ENCODE measurements at regions of chr2 and their contacts with region 1.

Region 1: DNA sequence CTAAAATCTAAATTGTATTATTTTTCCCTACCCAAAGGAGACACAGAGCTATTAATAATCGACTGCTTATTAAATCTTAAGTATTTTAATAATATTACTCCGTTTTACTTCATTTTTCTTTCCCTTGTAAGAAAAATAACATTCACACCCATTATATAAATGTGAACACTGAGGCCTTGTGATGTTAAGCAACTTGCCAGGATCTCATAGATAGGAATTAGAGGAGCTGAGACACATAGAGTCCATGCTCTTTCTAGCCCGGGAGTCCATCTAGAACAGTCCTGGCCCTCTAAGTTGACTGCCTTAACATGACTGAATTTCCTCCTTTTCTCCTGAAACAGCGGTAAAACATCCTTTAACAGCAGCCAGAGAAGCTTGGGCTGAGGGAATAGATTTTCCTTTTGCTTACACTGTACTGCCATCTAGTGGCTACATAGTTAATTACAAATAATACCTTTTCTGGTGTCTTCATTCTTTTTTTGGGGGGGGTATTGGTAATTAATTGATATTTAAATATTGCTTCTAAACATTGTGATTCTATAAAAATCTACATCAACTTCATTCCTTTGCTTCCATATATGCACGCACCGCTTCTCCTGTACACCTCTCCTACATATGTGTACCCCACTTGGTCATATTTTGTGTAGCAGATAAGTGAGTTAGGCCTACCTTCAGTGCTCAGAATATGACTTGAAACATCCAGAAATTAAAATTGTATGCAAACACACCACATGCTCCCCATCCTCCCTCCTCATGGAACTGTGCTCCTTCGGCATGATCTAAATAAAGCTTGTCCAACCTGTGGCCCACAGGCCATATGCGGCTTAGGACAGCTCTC is 125.8 kb upstream of the HNMT start:
- DNase-seq: peak; percentile 42 to 68 (median 62)
- ATAC-seq: peak; percentile 80
- H3K4me3 ChIP-seq: no peak overlapping the region
- H3K27ac ChIP-seq: no peak overlapping the region
- H3K4me1 ChIP-seq: no peaks in the 10 kb centered on the region
- H3K27me3 ChIP-seq: no peaks in the 10 kb centered on the region
- CTCF ChIP-seq: peak; percentile 46 to 68 (median 60); a peak in 5 of 6 replicates
- EP300 ChIP-seq: no peak
- POLR2A ChIP-seq: no peak
- RAD21 ChIP-seq: peak; percentile 85 to 91

Region 2: DNA sequence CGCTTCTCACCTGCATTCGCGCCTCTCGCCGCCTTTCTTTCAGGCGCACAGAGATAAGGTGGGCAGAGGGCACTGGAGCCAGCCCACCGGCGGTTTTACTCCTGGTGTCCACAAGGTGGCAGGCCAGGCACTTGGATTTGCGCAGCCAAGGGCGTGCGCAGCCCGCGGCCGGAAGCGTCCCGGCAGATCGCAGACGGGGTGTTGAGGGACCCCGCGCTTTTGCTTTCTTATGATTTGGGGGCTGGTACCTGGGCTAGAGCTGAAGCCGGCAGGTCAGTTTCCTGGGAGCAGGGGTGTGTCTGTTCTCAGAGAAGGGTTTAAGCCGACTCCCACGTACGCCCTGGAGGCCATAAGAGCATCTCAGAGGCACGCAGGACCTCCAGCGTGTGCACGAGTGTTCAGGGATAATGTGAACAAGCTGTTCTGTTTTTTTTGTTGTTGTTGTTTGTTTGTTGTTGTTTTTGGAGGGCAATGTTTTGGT is 1414.9 kb before region 1 on chr2:
- CTCF ChIA-PET with region 1: interaction called, 5 read pairs
- POLR2A ChIA-PET with region 1: no interaction called
- in situ Hi-C with region 1: loop called (anchors 25 kb)
- intact Hi-C with region 1: loop called (anchors 2 kb)
- DNase-seq: peak; percentile 74 to 81 (median 76)
- ATAC-seq: peak; percentile 100
- H3K4me3 ChIP-seq: peak overlapping the region; percentile 3; the same call in 1 of the 2 replicates
- H3K27ac ChIP-seq: no peak overlapping the region
- H3K4me1 ChIP-seq: peaks cover 0 to 5% of the 10 kb centered on the region in 2 experiments; a peak in 2 of 5 replicates
- H3K27me3 ChIP-seq: peaks cover 0 to 8% of the 10 kb centered on the region in 2 experiments; a peak in 2 of 5 replicates
- CTCF ChIP-seq: peak; percentile 82 to 90 (median 86)
- EP300 ChIP-seq: no peak
- POLR2A ChIP-seq: no peak
- RAD21 ChIP-seq: peak; percentile 87 to 91

Region 3: DNA sequence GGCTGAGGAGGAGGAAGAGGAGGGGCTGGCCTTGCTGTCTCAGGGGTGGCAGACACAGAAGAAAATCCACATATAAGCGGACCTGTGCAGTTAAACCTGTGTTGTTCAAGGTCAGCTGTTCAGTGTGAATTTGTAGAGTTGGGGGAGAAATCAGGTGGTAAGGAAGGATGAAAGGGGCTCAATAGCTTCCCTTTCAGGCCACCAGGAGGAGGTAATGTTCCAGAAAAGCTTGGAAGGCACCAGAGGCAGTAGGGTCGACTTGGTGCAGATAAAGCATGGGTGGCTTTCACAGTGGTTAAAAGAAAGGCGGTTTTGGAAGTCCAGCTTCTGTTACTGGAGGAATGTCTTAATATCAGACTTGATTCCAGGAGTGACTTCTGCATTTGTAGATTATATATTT is 905.8 kb before region 1 on chr2:
- CTCF ChIA-PET with region 1: no interaction called
- POLR2A ChIA-PET with region 1: no interaction called
- in situ Hi-C with region 1: no loop called
- intact Hi-C with region 1: loop called (anchors 5 kb)
- DNase-seq: no peak
- ATAC-seq: no peak
- H3K4me3 ChIP-seq: no peak overlapping the region
- H3K27ac ChIP-seq: no peak overlapping the region
- H3K4me1 ChIP-seq: no peaks in the 10 kb centered on the region
- H3K27me3 ChIP-seq: no peaks in the 10 kb centered on the region
- CTCF ChIP-seq: peak in 1 of 3 experiments; percentile 14; a peak in 1 of 6 replicates
- EP300 ChIP-seq: no peak
- POLR2A ChIP-seq: no peak
- RAD21 ChIP-seq: peak in 1 of 2 experiments; percentile 34; a peak in 2 of 4 replicates

Region 4: GRCh38 chr2:136985044-136985443 is 853.4 kb before region 1 on chr2:
- CTCF ChIA-PET with region 1: no interaction called
- POLR2A ChIA-PET with region 1: no interaction called
- in situ Hi-C with region 1: no loop called
- intact Hi-C with region 1: no loop called
- DNase-seq: no peak
- ATAC-seq: no peak
- H3K4me3 ChIP-seq: no peak overlapping the region
- H3K27ac ChIP-seq: no peak overlapping the region
- H3K4me1 ChIP-seq: no peaks in the 10 kb centered on the region
- H3K27me3 ChIP-seq: no peaks in the 10 kb centered on the region
- CTCF ChIP-seq: no peak
- EP300 ChIP-seq: no peak
- POLR2A ChIP-seq: no peak
- RAD21 ChIP-seq: no peak

Measured in K562 (cell line).